HEK293 (cell line): ENCODE measurements at regions of chr17 and their contacts with region 1.

Region 1: DNA sequence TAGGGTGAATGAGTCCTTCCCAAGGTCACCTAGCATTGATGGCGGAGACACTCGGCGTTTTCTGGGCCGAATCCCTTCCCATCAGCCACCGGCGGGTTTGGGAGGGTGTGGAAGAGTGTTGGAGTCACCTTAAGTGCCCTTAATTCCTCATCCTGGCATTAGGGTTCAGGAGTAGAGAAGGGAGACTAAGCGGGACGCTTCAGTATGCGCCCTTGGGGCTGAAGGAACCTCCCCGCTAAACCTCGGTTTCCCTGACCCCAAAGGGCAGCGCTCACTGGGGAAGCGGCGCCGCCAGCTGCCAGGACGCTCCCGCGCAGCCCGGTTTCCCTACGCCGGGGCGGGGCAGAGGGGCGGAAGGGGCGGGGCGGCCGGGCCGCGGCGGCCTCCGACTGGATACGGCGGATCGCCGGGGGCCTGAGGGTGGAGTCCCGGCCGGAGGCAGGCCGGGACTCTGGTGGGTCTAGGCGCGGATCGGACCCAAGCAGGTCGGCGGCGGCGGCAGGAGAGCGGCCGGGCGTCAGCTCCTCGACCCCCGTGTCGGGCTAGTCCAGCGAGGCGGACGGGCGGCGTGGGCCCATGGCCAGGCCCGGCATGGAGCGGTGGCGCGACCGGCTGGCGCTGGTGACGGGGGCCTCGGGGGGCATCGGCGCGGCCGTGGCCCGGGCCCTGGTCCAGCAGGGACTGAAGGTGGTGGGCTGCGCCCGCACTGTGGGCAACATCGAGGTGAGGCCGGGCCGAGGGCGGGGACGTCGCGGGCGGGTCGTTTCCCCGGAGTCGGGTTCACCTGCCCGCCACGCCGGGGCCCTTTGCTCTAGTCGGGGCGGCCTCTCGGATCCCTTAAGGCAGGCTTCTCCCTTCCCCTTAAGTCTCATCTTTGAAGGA is at the start of gene DHRS11:
- H3K4me3 ChIP-seq: peak within 1 kb of the TSS; percentile 77
- H3K27ac ChIP-seq: peak within 1 kb of the TSS; percentile 86
- H3K4me1 ChIP-seq: peaks cover 10% of the 10 kb centered on the region; the same call in 1 of the 2 replicates
- CTCF ChIP-seq: no peak

Region 2: GRCh38 chr17:36545465-36546417 is 45.9 kb before region 1 on chr17:
- CTCF ChIA-PET with region 1: no interaction called
- POLR2A ChIA-PET with region 1: interaction called, 26 read pairs
- H3K4me3 ChIP-seq: peak overlapping the region; percentile 99
- H3K27ac ChIP-seq: peak overlapping the region; percentile 96
- H3K4me1 ChIP-seq: peaks cover 11% of the 10 kb centered on the region
- CTCF ChIP-seq: peak; percentile 70